PC-9 (cell line): ENCODE measurements at regions of chr7 and their contacts with region 1.

Region 1: DNA sequence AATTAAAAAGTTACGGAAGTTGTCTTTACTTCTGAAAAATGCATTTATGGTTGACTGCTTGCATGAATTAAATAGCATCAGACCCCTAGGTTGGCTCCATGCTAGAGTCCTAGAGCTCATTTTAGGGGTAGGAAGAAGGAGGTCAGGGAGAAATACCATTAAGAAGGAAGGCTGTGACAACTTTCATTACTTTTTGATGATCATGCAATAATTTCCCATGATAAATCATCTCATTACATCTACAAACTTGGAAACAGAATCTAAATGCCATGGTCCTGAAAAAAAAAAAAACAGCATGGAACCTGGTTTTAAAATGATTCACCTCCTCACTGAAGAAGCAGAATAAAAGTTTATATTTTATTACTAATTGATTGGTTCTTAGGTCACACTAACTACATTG is 20.3 kb upstream of the PLXNA4 start:
- DNase-seq: no peak
- H3K4me3 ChIP-seq: no peak overlapping the region
- H3K27ac ChIP-seq: no peak overlapping the region
- H3K4me1 ChIP-seq: no peaks in the 10 kb centered on the region
- H3K27me3 ChIP-seq: peaks cover 39% of the 10 kb centered on the region
- CTCF ChIP-seq: no peak

Region 2: DNA sequence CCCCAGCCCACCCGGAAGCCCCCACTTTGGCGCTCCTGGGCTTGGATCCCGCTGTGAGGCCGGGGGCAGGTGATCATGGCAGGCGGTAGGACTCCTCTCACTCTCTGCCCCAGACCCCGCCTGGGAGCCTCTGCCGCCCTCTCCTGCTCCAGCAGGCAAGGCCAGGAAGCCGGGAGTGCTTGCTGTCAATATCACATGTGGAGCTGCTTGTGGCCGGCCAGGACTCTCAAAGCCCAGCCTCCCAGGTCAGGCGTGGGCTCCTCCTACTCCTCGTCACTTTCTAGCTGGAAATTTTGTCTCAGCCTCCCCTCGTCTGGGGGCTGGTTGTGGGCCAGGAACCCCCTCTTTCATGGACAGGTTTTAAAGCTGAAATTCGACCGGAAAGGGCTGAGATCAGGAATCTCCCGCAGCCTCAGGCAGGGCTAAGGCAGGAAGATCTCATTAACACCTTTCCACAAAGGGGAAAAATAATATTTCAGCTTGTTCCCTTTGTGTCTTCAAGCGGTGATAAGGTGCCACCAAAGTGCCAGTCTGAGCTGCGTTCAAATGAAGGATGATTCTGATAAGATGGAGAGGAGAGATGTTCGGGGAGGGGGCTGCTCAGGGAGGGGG is 766.5 kb before region 1 on chr7:
- CTCF ChIA-PET with region 1: no interaction called
- POLR2A ChIA-PET with region 1: no interaction called
- intact Hi-C with region 1: no loop called
- DNase-seq: no peak
- H3K4me3 ChIP-seq: no peak overlapping the region
- H3K27ac ChIP-seq: no peak overlapping the region
- H3K4me1 ChIP-seq: no peaks in the 10 kb centered on the region
- H3K27me3 ChIP-seq: peaks cover 83% of the 10 kb centered on the region
- CTCF ChIP-seq: no peak

Region 3: DNA sequence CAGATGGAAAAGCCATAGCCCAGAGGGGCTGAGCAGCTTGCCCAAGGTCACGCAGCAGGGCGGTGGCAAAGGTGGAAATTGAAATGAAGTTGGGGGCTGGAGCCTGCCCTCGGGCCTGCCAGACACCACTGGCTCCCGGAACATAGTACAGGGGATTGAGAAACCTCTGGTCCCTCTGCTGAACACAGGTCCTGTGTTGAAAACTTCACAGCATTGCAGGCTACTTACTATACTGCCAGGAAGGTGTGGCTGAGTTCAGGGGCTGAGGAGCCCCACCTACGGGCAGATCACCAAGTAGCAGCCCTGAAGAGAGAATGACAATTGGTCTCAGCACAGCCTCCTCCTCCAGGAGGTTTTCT is 347.0 kb before region 1 on chr7:
- CTCF ChIA-PET with region 1: no interaction called
- POLR2A ChIA-PET with region 1: no interaction called
- intact Hi-C with region 1: no loop called
- DNase-seq: no peak
- H3K4me3 ChIP-seq: no peak overlapping the region
- H3K27ac ChIP-seq: no peak overlapping the region
- H3K4me1 ChIP-seq: no peaks in the 10 kb centered on the region
- H3K27me3 ChIP-seq: peaks cover 57% of the 10 kb centered on the region
- CTCF ChIP-seq: no peak; the same call in 1 of the 2 replicates

Region 4: GRCh38 chr7:132422502-132423111 is 174.0 kb before region 1 on chr7:
- CTCF ChIA-PET with region 1: no interaction called
- POLR2A ChIA-PET with region 1: no interaction called
- intact Hi-C with region 1: no loop called
- DNase-seq: no peak
- H3K4me3 ChIP-seq: no peak overlapping the region
- H3K27ac ChIP-seq: no peak overlapping the region
- H3K4me1 ChIP-seq: no peaks in the 10 kb centered on the region
- H3K27me3 ChIP-seq: peaks cover 64% of the 10 kb centered on the region
- CTCF ChIP-seq: no peak

Region 5: DNA sequence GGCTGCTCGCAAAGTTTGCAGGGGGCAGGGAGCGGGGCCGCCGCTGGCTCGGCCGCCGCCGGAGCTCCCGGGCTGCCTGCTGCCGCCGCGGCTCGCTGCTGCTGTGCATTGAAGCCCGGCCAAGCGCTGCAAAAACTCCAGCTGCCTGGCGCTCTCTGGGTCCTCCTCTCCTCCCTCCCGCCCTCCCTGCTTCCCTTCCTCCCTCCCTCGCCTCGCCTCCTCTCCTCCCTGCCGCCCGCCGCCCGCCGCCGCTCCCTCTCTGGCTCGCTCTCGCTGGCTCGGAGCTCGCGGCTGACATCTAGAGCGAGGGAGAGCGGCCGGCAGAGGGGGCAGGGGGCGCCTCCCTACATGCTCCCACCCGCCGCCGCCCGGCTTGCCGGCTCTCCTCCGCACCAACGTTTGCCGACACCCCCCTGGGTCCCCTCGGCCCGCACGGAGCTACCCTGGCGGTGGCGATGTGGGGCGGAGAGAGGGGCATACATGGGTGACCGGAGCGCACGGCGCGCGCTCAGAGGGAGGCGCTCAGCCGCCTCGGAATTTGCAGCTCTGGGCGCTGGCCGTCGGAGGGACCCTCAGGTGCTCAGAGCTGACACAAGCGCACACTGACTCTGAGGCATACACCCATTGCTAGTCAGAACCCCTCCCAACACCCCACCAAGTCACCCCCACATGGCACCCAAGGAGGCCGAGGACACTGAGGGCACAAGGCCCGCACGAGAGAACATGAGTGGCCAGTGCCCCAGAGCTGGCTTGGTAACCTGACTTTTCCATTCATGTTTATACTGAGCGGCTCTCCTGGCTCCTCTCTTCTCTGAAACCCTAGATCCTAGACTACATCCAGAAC is 19.2 kb before region 1 on chr7:
- CTCF ChIA-PET with region 1: no interaction called
- POLR2A ChIA-PET with region 1: no interaction called
- intact Hi-C with region 1: no loop called
- DNase-seq: no peak
- H3K4me3 ChIP-seq: no peak overlapping the region
- H3K27ac ChIP-seq: no peak overlapping the region
- H3K4me1 ChIP-seq: no peaks in the 10 kb centered on the region
- H3K27me3 ChIP-seq: peaks cover 63% of the 10 kb centered on the region
- CTCF ChIP-seq: no peak

Region 6: DNA sequence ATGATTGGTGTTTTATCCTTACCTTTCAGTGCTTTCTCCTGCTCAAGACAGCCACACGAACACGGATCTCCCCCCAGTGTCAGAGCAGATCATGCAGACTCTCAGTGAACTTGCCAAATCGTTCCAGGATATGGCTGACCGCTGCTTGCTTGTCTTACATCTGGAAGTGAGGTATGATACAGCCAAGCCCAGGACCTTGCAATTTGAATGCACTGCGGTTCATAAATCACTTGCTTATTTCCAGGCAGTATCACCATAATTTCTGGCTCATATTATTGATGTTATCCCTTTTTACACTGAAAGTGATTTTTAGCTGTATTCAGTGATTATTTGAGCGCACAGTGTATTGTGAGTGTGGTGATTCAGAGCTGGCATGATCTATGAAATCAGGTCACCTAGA is 1400.9 kb after region 1 on chr7:
- CTCF ChIA-PET with region 1: no interaction called
- POLR2A ChIA-PET with region 1: interaction called, 39 read pairs
- intact Hi-C with region 1: no loop called
- DNase-seq: no peak
- H3K4me3 ChIP-seq: no peak overlapping the region
- H3K27ac ChIP-seq: no peak overlapping the region
- H3K4me1 ChIP-seq: no peaks in the 10 kb centered on the region
- H3K27me3 ChIP-seq: no peaks in the 10 kb centered on the region
- CTCF ChIP-seq: no peak